Natural killer cell (primary cell): ENCODE measurements at regions of chr17 and their contacts with region 1.

Region 1: GRCh38 chr17:42484304-42484703 is 25.6 kb downstream of the ATP6V0A1 start:
- DNase-seq: peak; percentile 56 to 94
- ATAC-seq: peak; percentile 95 to 97 (median 95)
- H3K4me3 ChIP-seq: no peak overlapping the region
- H3K4me3 Mint-ChIP-seq: peak overlapping the region; percentile 79
- H3K27ac ChIP-seq: no peak overlapping the region
- H3K27ac Mint-ChIP-seq: peak overlapping the region; percentile 55 to 67
- H3K4me1 ChIP-seq: peaks cover 29% of the 10 kb centered on the region
- H3K4me1 Mint-ChIP-seq: peaks cover 8 to 23% of the 10 kb centered on the region in 2 donors
- H3K27me3 ChIP-seq: peaks cover 33% of the 10 kb centered on the region
- H3K27me3 Mint-ChIP-seq: peaks cover 22 to 33% of the 10 kb centered on the region in 2 donors
- CTCF ChIP-seq: no peak

Region 2: GRCh38 chr17:42438600-42439567 is 45.4 kb before region 1 on chr17:
- intact Hi-C with region 1: loop called (anchors 10 kb)
- DNase-seq: peak; percentile 41 to 71
- ATAC-seq: peak in 1 of 3 donors; percentile 39
- H3K4me3 ChIP-seq: no peak overlapping the region
- H3K4me3 Mint-ChIP-seq: no peak overlapping the region
- H3K27ac ChIP-seq: no peak overlapping the region
- H3K27ac Mint-ChIP-seq: no peak overlapping the region
- H3K4me1 ChIP-seq: peaks cover 5% of the 10 kb centered on the region
- H3K4me1 Mint-ChIP-seq: peaks cover 3 to 11% of the 10 kb centered on the region in 2 donors
- H3K27me3 ChIP-seq: no peaks in the 10 kb centered on the region
- H3K27me3 Mint-ChIP-seq: peaks cover 7% of the 10 kb centered on the region in 2 donors
- CTCF ChIP-seq: peak; percentile 68

Region 3: GRCh38 chr17:42459256-42459800 is 25.0 kb before region 1 on chr17:
- intact Hi-C with region 1: loop called (anchors 1 kb)
- DNase-seq: peak in 1 of 2 donors; percentile 36
- ATAC-seq: peak in 1 of 3 donors; percentile 6
- H3K4me3 ChIP-seq: peak overlapping the region; percentile 50
- H3K4me3 Mint-ChIP-seq: peak overlapping the region; percentile 84
- H3K27ac ChIP-seq: peak overlapping the region; percentile 57
- H3K27ac Mint-ChIP-seq: peak overlapping the region in 1 of 2 donors; percentile 72
- H3K4me1 ChIP-seq: peaks cover 41% of the 10 kb centered on the region
- H3K4me1 Mint-ChIP-seq: peaks cover 43 to 45% of the 10 kb centered on the region in 2 donors
- H3K27me3 ChIP-seq: peaks cover 24% of the 10 kb centered on the region
- H3K27me3 Mint-ChIP-seq: peaks cover 28 to 34% of the 10 kb centered on the region in 2 donors
- CTCF ChIP-seq: no peak

Region 4: GRCh38 chr17:42536048-42536371 is 51.7 kb after region 1 on chr17 and contains the start of gene NAGLU:
- intact Hi-C with region 1: loop called (anchors 2 kb)
- DNase-seq: peak; percentile 84 to 85
- ATAC-seq: peak; percentile 88 to 92 (median 88)
- H3K4me3 ChIP-seq: peak within 1 kb of the TSS; percentile 54
- H3K4me3 Mint-ChIP-seq: peak within 1 kb of the TSS; percentile 88
- H3K27ac ChIP-seq: peak within 1 kb of the TSS; percentile 77
- H3K27ac Mint-ChIP-seq: peak within 1 kb of the TSS; percentile 75 to 83
- H3K4me1 ChIP-seq: peaks cover 37% of the 10 kb centered on the region
- H3K4me1 Mint-ChIP-seq: peaks cover 27 to 50% of the 10 kb centered on the region in 2 donors
- H3K27me3 ChIP-seq: no peaks in the 10 kb centered on the region
- H3K27me3 Mint-ChIP-seq: no peaks in the 10 kb centered on the region
- CTCF ChIP-seq: no peak
- total RNA-seq, gene NAGLU: 34.8 to 44.3 (median 36.4) TPM